Common myeloid progenitor, CD34-positive (primary cell): ENCODE measurements at regions of chr7 and their contacts with region 1.

Region 1: DNA sequence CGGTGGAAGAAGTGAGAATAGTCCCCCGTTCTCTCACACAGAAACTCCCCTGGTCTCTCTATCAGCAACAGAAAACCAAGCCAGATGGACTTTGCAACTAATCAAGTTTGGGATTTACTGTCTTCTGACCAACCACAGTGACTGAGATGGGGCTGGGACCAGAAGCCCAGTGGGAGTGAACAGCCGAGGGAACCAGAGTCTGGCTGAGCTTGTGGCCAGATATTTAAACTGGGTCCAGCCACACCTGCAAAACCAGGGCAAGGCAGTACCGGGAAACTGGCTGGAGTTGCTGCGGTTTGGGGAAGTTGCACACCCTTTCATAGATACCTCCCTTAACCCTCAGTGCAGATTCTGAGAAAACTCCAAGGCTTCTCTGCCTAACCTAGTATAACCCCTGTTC is 6.0 kb downstream of the GSTK1 start:
- DNase-seq: no peak
- H3K4me3 ChIP-seq: no peak overlapping the region
- H3K27ac ChIP-seq: peak overlapping the region in 1 of 2 experiments; percentile 5
- H3K4me1 ChIP-seq: peaks cover 0 to 32% (median 20%) of the 10 kb centered on the region in 4 experiments
- H3K27me3 ChIP-seq: no peaks in the 10 kb centered on the region

Region 2: DNA sequence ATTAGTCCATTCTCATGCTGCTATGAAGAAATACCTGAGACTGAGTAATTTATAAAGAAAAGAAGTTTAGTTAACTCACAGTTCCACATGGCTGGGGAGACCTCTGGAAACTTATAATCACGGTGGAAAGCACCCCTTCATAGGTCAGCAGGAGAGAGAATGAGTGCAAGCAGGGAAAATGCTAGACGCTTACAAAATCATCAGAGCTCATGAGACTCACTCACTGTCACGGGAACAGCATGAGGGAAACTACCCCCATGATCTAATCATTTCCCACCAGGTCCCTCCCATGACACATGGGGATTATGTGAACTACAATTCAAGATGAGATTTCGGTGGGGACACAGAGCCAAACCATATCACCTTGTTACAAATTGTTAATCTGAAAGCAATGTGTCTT is 70.2 kb before region 1 on chr7:
- CTCF ChIA-PET with region 1: no interaction called
- POLR2A ChIA-PET with region 1: no interaction called
- DNase-seq: no peak
- H3K4me3 ChIP-seq: no peak overlapping the region
- H3K27ac ChIP-seq: no peak overlapping the region
- H3K4me1 ChIP-seq: no peaks in the 10 kb centered on the region
- H3K27me3 ChIP-seq: peaks cover 0 to 15% (median 3%) of the 10 kb centered on the region in 5 experiments

Region 3: GRCh38 chr7:143279186-143280098 is 10.2 kb after region 1 on chr7:
- CTCF ChIA-PET with region 1: interaction called, 19 read pairs
- POLR2A ChIA-PET with region 1: no interaction called
- DNase-seq: peak in 2 of 3 donors; percentile 61 to 72
- H3K4me3 ChIP-seq: no peak overlapping the region
- H3K27ac ChIP-seq: peak overlapping the region in 1 of 2 experiments; percentile 49
- H3K4me1 ChIP-seq: peaks cover 0 to 19% (median 13%) of the 10 kb centered on the region in 4 experiments
- H3K27me3 ChIP-seq: no peaks in the 10 kb centered on the region

Region 4: GRCh38 chr7:143321734-143322133 is 52.5 kb after region 1 on chr7:
- CTCF ChIA-PET with region 1: no interaction called
- POLR2A ChIA-PET with region 1: no interaction called
- DNase-seq: no peak
- H3K4me3 ChIP-seq: no peak overlapping the region
- H3K27ac ChIP-seq: no peak overlapping the region
- H3K4me1 ChIP-seq: peaks cover 2 to 24% (median 9%) of the 10 kb centered on the region in 4 experiments
- H3K27me3 ChIP-seq: no peaks in the 10 kb centered on the region

Region 5: GRCh38 chr7:143385891-143386781 is 116.9 kb after region 1 on chr7:
- CTCF ChIA-PET with region 1: no interaction called
- POLR2A ChIA-PET with region 1: no interaction called
- DNase-seq: peak; percentile 48 to 86 (median 76)
- H3K4me3 ChIP-seq: peak overlapping the region in 5 of 7 experiments; percentile 9 to 67 (median 46)
- H3K27ac ChIP-seq: no peak overlapping the region
- H3K4me1 ChIP-seq: peaks cover 10 to 61% (median 55%) of the 10 kb centered on the region in 4 experiments
- H3K27me3 ChIP-seq: no peaks in the 10 kb centered on the region

Region 6: GRCh38 chr7:143463556-143463955 is 194.3 kb after region 1 on chr7:
- CTCF ChIA-PET with region 1: no interaction called
- POLR2A ChIA-PET with region 1: no interaction called
- DNase-seq: peak in 2 of 3 donors; percentile 39 to 55
- H3K4me3 ChIP-seq: no peak overlapping the region
- H3K27ac ChIP-seq: no peak overlapping the region
- H3K4me1 ChIP-seq: no peaks in the 10 kb centered on the region
- H3K27me3 ChIP-seq: no peaks in the 10 kb centered on the region